IMR-90 (cell line): ENCODE measurements at regions of chr12 and their contacts with region 1.

Region 1: DNA sequence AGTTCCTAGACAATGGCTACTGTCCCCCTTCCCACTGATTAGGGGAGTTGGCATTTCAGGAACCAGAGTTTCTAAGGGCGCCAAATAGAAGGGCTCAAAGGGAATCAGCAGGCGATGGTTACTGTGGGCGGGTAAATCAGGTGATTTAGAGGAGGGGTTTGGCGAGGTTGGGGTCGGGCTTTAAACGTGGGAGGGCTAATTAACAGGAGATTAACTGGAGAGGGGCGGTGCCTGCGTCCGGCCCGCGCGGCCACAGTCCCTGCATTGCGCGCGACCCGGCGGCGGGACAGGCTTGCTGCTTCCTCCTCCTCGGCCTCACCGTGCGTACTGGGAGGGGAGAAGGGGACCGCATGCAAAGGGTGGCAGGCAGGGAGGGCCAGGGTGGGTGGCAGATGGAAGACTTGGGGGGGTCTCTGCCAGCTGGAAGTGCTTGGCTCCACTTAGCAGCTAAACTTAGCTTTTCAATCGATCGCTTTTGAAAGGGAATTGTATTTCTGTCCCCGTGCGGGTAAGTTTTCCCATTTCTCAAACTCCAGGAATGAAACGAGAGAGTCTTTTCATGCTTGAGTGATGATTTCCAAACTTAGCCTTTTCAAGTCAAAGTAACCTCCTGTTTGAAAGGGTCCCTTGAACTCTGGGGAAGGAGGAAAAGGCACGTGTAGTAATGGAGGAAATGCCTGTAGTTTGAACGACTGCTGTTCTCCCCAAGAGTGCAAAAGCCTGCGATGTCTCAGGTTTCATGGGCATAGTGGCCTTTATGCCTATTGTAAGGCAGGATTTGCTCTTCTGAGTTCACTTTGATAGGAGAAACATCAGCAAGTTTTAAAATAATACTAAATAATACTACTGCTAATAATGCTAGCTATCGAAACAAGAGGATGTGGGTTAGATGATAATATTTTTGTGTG is at the start of gene MGST1:
- DNase-seq: peak; percentile 59
- ATAC-seq: peak; percentile 73
- H3K4me3 ChIP-seq: peak within 1 kb of the TSS; percentile 93
- H3K27ac ChIP-seq: peak within 1 kb of the TSS; percentile 98
- H3K4me1 ChIP-seq: peaks cover 6% of the 10 kb centered on the region
- H3K27me3 ChIP-seq: no peaks in the 10 kb centered on the region
- CTCF ChIP-seq: no peak
- POLR2A ChIP-seq: peak; percentile 72
- RAD21 ChIP-seq: no peak
- total RNA-seq, gene MGST1: 87.2 and 105 TPM in 2 replicates

Region 2: GRCh38 chr12:15979096-15980092 is 368.3 kb before region 1 on chr12:
- CTCF ChIA-PET with region 1: no interaction called
- POLR2A ChIA-PET with region 1: no interaction called
- dilution Hi-C with region 1: no loop called
- in situ Hi-C with region 1: no loop called
- intact Hi-C with region 1: loop called (anchors 2 kb)
- DNase-seq: peak; percentile 93
- ATAC-seq: peak; percentile 74
- H3K4me3 ChIP-seq: no peak overlapping the region
- H3K27ac ChIP-seq: peak overlapping the region; percentile 81
- H3K4me1 ChIP-seq: peaks cover 22% of the 10 kb centered on the region
- H3K27me3 ChIP-seq: no peaks in the 10 kb centered on the region
- CTCF ChIP-seq: peak; percentile 37
- POLR2A ChIP-seq: no peak
- RAD21 ChIP-seq: no peak

Region 3: GRCh38 chr12:16323010-16323409 is 24.6 kb before region 1 on chr12:
- CTCF ChIA-PET with region 1: no interaction called
- POLR2A ChIA-PET with region 1: no interaction called
- dilution Hi-C with region 1: no loop called
- in situ Hi-C with region 1: no loop called
- intact Hi-C with region 1: no loop called
- DNase-seq: peak; percentile 42
- ATAC-seq: peak; percentile 32; the same call in 1 of the 2 replicates
- H3K4me3 ChIP-seq: no peak overlapping the region
- H3K27ac ChIP-seq: no peak overlapping the region
- H3K4me1 ChIP-seq: no peaks in the 10 kb centered on the region
- H3K27me3 ChIP-seq: no peaks in the 10 kb centered on the region
- CTCF ChIP-seq: no peak
- POLR2A ChIP-seq: no peak
- RAD21 ChIP-seq: no peak

Region 4: GRCh38 chr12:16504200-16504599 is 156.6 kb after region 1 on chr12:
- CTCF ChIA-PET with region 1: no interaction called
- POLR2A ChIA-PET with region 1: no interaction called
- dilution Hi-C with region 1: no loop called
- in situ Hi-C with region 1: no loop called
- intact Hi-C with region 1: no loop called
- DNase-seq: no peak
- ATAC-seq: no peak
- H3K4me3 ChIP-seq: no peak overlapping the region
- H3K27ac ChIP-seq: no peak overlapping the region
- H3K4me1 ChIP-seq: no peaks in the 10 kb centered on the region
- H3K27me3 ChIP-seq: no peaks in the 10 kb centered on the region
- CTCF ChIP-seq: no peak
- POLR2A ChIP-seq: no peak
- RAD21 ChIP-seq: no peak